Mammary epithelial cell (primary cell): ENCODE measurements at regions of chrX and their contacts with region 1.

Region 1: DNA sequence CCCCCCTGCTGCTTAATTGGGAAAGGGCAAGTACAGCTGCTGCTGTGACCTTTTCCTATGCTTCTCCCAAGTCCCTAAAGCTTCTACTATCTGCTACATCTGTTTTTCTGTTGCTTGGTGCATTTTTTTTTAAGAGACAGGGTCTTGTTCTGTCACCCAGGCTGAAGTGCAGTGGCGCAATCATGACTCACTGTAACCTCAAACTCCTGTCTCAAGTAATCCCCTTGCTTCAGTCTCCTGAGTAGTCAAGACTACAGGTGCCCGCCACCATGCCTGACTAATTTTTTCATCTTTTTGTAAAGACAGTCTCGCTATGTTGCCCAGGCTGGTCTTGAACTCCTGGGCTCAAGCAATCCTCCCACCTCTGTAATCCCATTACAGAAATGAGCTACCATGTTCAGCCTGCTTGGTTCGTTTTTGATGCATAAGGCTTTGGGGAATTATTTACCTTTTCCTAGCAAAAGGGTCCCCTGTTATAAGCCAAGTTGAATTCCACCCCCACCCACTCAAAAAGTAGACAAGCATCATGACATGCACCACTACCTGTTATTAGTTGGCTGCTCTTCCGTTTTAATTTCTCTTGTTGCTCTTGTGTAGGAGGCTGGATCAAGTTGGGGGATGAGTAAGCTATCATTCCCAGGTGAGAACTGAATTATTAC is 39.6 kb downstream of the DGKK start:
- DNase-seq: no peak
- H3K4me3 ChIP-seq: no peak overlapping the region
- H3K27ac ChIP-seq: no peak overlapping the region
- H3K4me1 ChIP-seq: no peaks in the 10 kb centered on the region
- H3K27me3 ChIP-seq: peaks cover 14% of the 10 kb centered on the region
- CTCF ChIP-seq: no peak

Region 2: DNA sequence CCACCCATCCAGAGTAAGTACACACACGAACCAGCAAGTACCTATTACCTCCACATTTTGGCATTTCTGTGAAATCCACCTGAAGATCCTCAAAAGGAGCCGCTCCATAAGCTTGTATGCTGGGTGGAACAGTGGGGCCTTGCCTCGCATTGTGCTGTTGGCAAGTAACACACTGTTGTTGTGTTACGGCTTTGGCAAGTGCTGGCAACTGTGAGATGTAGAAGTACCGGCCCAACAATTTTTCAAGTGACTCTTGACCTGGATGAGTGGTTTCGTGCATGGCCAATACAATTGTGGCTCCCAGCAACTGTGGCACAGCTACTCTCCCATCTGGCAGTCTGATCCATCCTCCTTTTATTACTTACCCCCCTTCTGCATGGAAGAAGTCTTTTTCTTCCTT is 97.7 kb before region 1 on chrX:
- CTCF ChIA-PET with region 1: no interaction called
- dilution Hi-C with region 1: loop called (anchors 5 kb)
- in situ Hi-C with region 1: no loop called
- intact Hi-C with region 1: no loop called
- DNase-seq: no peak
- H3K4me3 ChIP-seq: no peak overlapping the region
- H3K27ac ChIP-seq: no peak overlapping the region
- H3K4me1 ChIP-seq: no peaks in the 10 kb centered on the region
- H3K27me3 ChIP-seq: no peaks in the 10 kb centered on the region
- CTCF ChIP-seq: no peak

Region 3: DNA sequence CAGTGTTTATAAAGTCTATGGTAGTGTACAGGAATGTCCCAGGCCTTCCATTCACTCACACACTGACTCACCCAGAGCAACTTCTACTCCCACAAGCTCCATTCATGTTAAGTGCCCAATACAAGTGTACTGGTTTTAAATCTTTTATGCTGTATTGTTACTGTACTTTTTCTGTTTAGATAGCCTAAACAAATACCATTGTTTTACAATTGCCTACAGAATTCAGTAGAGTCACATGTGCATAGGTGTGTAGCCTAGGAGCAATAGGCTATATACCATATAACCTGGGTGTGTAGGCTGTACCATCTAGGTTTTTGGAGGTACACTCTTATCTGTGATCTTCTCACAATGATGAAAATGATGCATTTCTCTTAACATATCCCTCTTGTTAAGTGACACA is 87.1 kb before region 1 on chrX:
- CTCF ChIA-PET with region 1: no interaction called
- dilution Hi-C with region 1: no loop called
- in situ Hi-C with region 1: no loop called
- intact Hi-C with region 1: no loop called
- DNase-seq: no peak
- H3K4me3 ChIP-seq: no peak overlapping the region
- H3K27ac ChIP-seq: no peak overlapping the region
- H3K4me1 ChIP-seq: no peaks in the 10 kb centered on the region
- H3K27me3 ChIP-seq: peaks cover 10% of the 10 kb centered on the region
- CTCF ChIP-seq: no peak

Region 4: GRCh38 chrX:50483283-50483682 is 52.2 kb after region 1 on chrX:
- CTCF ChIA-PET with region 1: no interaction called
- dilution Hi-C with region 1: loop called (anchors 5 kb)
- in situ Hi-C with region 1: no loop called
- intact Hi-C with region 1: no loop called
- DNase-seq: no peak
- H3K4me3 ChIP-seq: no peak overlapping the region
- H3K27ac ChIP-seq: no peak overlapping the region
- H3K4me1 ChIP-seq: no peaks in the 10 kb centered on the region
- H3K27me3 ChIP-seq: peaks cover 2% of the 10 kb centered on the region
- CTCF ChIP-seq: no peak